ENCODE measurements at regions of chr1 and their contacts with region 1.

Region 1: DNA sequence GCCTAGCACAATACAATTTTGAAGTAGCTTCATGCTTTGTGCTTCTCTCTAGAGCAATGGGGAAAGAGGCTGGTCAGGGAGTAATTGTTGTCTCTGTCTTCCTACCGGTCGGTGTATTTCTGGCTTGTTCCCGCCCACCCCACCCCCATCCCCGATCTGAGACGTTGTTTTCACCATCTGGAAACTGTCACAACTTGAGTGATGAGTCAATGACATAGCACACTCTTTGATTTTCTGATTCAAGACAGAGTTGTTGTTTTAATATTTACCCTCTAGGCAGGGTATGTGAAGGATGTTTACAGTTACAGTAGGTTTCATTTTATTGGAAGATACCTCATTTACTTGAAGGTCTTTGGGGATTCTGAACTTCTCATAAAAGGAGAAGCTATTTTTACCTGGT is 7.0 kb downstream of the IL12RB2 start:
- DNase-seq: no peak
- H3K4me3 Mint-ChIP-seq: peak overlapping the region; percentile 100
- H3K27ac Mint-ChIP-seq: peak overlapping the region; percentile 97
- H3K4me1 Mint-ChIP-seq: peaks cover 6% of the 10 kb centered on the region
- H3K27me3 Mint-ChIP-seq: no peaks in the 10 kb centered on the region

Region 2: DNA sequence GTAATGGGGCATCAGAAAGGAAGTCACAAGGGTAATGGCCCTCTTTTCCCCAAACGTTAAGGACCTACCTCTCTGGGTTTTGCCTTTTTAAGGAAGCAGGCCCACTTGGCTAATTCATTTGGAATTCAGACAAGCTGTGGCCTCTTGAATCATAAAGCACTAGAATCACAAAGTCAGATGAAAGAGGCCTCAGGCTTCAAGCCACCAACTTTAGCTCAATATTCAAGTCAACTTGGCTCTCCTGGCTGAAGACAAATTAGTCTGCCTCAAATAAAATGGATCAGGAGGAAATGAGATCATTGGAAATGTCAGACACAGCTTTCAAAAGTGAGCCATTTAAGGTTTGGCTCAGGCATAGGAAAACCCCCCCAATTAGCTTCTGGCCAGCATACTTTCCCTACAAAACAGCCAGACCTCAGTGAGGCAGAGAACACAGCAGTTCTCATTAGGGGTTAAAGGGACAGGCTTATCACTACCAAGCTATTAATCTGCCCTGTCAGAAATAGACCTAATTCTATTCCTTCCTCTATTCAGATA is 295.0 kb before region 1 on chr1:
- intact Hi-C with region 1: no loop called
- DNase-seq: no peak
- H3K4me3 Mint-ChIP-seq: no peak overlapping the region
- H3K27ac Mint-ChIP-seq: peak overlapping the region; percentile 2
- H3K4me1 Mint-ChIP-seq: peaks cover 9% of the 10 kb centered on the region
- H3K27me3 Mint-ChIP-seq: no peaks in the 10 kb centered on the region

Region 3: GRCh38 chr1:67285780-67286488 is 28.8 kb before region 1 on chr1:
- intact Hi-C with region 1: loop called (anchors 1 kb)
- DNase-seq: no peak
- H3K4me3 Mint-ChIP-seq: peak overlapping the region; percentile 5
- H3K27ac Mint-ChIP-seq: peak overlapping the region; percentile 79
- H3K4me1 Mint-ChIP-seq: peaks cover 61% of the 10 kb centered on the region
- H3K27me3 Mint-ChIP-seq: no peaks in the 10 kb centered on the region

Region 4: GRCh38 chr1:67298762-67299161 is 15.9 kb before region 1 on chr1:
- intact Hi-C with region 1: no loop called
- DNase-seq: no peak
- H3K4me3 Mint-ChIP-seq: no peak overlapping the region
- H3K27ac Mint-ChIP-seq: no peak overlapping the region
- H3K4me1 Mint-ChIP-seq: peaks cover 90% of the 10 kb centered on the region
- H3K27me3 Mint-ChIP-seq: no peaks in the 10 kb centered on the region

Region 5: GRCh38 chr1:67372136-67372535 is 57.4 kb after region 1 on chr1:
- intact Hi-C with region 1: no loop called
- DNase-seq: no peak
- H3K4me3 Mint-ChIP-seq: no peak overlapping the region
- H3K27ac Mint-ChIP-seq: peak overlapping the region; percentile 19
- H3K4me1 Mint-ChIP-seq: peaks cover 40% of the 10 kb centered on the region
- H3K27me3 Mint-ChIP-seq: no peaks in the 10 kb centered on the region